ENCODE measurements at regions of chr1 and their contacts with region 1.

Region 1: DNA sequence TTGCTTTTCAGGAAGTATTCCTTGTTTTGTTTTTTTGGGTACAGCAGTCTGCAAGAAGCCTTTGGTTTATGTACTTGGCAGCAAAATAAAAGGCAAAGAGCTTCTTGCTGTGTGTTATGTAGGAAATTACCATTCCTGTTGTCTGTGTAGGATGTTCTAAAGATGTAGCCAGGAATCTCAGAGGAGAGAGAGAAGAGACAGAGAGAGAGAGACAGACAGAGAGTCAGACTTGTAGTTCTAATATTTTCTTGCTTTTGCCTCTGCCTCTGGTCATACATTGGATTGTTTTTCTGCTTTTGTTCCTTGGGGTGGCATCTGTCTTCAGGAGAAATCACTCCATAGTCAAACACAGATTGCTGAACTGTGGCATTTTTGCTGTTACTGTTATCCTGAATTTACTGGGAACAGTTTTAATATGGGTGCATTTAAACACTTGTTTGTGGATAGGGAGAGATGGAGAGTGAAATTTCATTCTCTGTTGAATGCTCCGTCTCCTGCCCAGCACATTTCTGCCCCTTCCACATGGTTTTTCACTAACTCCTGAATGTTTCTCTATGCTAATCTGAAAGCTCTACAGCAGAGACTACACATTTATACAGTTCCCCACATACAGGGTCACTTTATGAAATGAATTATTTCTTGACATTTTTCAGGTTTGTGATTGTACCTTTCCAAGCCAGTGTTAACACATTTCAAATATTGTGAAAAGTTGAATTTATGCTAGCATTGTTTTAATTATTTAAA is 49.8 kb downstream of the POU2F1 start:
- DNase-seq: no peak
- ATAC-seq: no peak
- H3K4me3 Mint-ChIP-seq: no peak overlapping the region
- H3K27ac Mint-ChIP-seq: no peak overlapping the region
- H3K4me1 Mint-ChIP-seq: peaks cover 42% of the 10 kb centered on the region
- H3K27me3 Mint-ChIP-seq: no peaks in the 10 kb centered on the region
- CTCF ChIP-seq: no peak

Region 2: DNA sequence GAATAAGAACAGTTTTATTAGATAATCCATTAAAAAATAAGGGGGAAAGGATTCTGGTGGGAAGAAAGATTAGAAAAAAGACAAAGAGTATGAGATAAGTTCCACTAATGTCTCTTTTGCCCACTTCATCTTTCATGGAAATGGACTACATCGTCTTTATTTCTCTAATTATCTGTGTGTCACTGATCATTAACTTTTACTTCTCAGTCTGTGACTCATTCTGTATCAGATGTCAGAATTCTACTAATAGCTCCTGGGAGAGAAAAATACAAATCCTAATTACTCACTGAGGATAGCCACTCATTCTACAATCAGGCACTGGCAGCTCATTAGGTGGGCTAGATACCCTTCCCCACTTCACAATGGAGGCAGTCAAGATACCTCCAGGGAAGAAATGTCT is 336.9 kb before region 1 on chr1:
- CTCF ChIA-PET with region 1: no interaction called
- POLR2A ChIA-PET with region 1: no interaction called
- intact Hi-C with region 1: no loop called
- DNase-seq: no peak
- ATAC-seq: no peak
- H3K4me3 Mint-ChIP-seq: no peak overlapping the region
- H3K27ac Mint-ChIP-seq: no peak overlapping the region
- H3K4me1 Mint-ChIP-seq: peaks cover 17% of the 10 kb centered on the region
- H3K27me3 Mint-ChIP-seq: no peaks in the 10 kb centered on the region
- CTCF ChIP-seq: no peak

Region 3: GRCh38 chr1:167342846-167343245 is 72.3 kb after region 1 on chr1:
- CTCF ChIA-PET with region 1: interaction called, 86 read pairs
- POLR2A ChIA-PET with region 1: interaction called, 3 read pairs
- intact Hi-C with region 1: loop called (anchors 1 kb)
- DNase-seq: no peak
- ATAC-seq: peak; percentile 70
- H3K4me3 Mint-ChIP-seq: no peak overlapping the region
- H3K27ac Mint-ChIP-seq: no peak overlapping the region
- H3K4me1 Mint-ChIP-seq: peaks cover 17% of the 10 kb centered on the region
- H3K27me3 Mint-ChIP-seq: no peaks in the 10 kb centered on the region
- CTCF ChIP-seq: no peak

Region 4: GRCh38 chr1:167373398-167373797 is 102.9 kb after region 1 on chr1:
- CTCF ChIA-PET with region 1: interaction called, 15 read pairs
- POLR2A ChIA-PET with region 1: no interaction called
- intact Hi-C with region 1: no loop called
- DNase-seq: no peak
- ATAC-seq: no peak
- H3K4me3 Mint-ChIP-seq: no peak overlapping the region
- H3K27ac Mint-ChIP-seq: no peak overlapping the region
- H3K4me1 Mint-ChIP-seq: no peaks in the 10 kb centered on the region
- H3K27me3 Mint-ChIP-seq: no peaks in the 10 kb centered on the region
- CTCF ChIP-seq: no peak

Region 5: DNA sequence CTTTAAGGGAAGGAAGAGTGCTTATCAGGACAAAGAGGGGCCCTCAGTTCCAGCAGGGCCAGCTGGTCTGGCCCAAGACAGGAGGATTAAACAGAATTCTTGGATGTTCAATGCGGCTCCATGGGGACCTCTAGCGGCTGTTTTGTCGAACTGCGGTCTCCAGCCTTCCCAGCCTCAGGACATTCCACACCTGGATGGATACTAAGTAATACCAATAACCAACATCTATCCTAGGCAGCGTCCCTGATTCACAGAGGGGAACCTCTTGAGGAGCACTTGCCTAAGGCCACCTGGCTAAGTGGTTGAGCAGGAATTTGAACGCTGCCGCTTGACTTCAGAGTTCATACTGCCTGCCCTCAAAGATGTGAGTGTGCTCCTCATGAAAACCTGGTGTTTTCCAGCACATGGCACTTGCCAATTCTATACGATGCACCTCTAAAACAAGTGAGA is 263.4 kb after region 1 on chr1:
- CTCF ChIA-PET with region 1: interaction called, 45 read pairs
- POLR2A ChIA-PET with region 1: no interaction called
- intact Hi-C with region 1: loop called (anchors 1 kb)
- DNase-seq: peak; percentile 36
- ATAC-seq: peak; percentile 78
- H3K4me3 Mint-ChIP-seq: no peak overlapping the region
- H3K27ac Mint-ChIP-seq: no peak overlapping the region
- H3K4me1 Mint-ChIP-seq: peaks cover 4% of the 10 kb centered on the region
- H3K27me3 Mint-ChIP-seq: no peaks in the 10 kb centered on the region
- CTCF ChIP-seq: no peak

Region 6: GRCh38 chr1:167553136-167554027 is 282.9 kb after region 1 on chr1 and contains the start of gene CREG1:
- CTCF ChIA-PET with region 1: interaction called, 4 read pairs
- POLR2A ChIA-PET with region 1: no interaction called
- intact Hi-C with region 1: loop called (anchors 5 kb)
- DNase-seq: peak; percentile 84
- ATAC-seq: peak; percentile 99
- H3K4me3 Mint-ChIP-seq: peak within 1 kb of the TSS; percentile 86
- H3K27ac Mint-ChIP-seq: peak within 1 kb of the TSS; percentile 41
- H3K4me1 Mint-ChIP-seq: peaks cover 19% of the 10 kb centered on the region
- H3K27me3 Mint-ChIP-seq: no peaks in the 10 kb centered on the region
- CTCF ChIP-seq: no peak
- total RNA-seq, gene CREG1: 3.1 and 3.8 TPM in 2 replicates

Measured in activated B cell treated with CpG ODN at 0.5 μM for 24 hours (primary cell).